ENCODE measurements at regions of chr17 and their contacts with region 1.

Region 1: DNA sequence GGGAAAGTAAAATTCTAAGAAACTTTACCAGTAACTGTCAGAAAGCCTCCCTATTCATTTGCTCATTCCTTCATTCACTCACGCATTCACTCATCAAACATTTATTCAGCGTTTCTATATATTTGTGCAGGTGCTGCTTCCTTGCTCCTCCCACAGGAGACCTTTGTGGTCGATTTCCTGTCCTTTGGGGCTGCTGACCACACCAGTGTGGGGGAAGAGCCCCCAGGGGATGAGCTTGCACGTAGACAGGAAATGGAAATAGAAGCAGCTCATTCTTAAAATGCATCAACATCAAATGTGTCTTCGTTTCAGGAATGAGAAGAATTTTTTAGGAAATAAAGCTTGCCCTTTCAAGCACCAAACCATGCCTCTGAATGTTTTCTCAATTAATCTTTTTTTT is 9.6 kb downstream of the PIK3R6 start:
- DNase-seq: no peak
- H3K4me3 ChIP-seq: no peak overlapping the region
- H3K4me3 Mint-ChIP-seq: peak overlapping the region; percentile 24 to 28
- H3K27ac ChIP-seq: peak overlapping the region; percentile 71 to 85
- H3K27ac Mint-ChIP-seq: peak overlapping the region in 6 of 7 donors; percentile 30 to 98 (median 88)
- H3K4me1 ChIP-seq: peaks cover 59 to 60% of the 10 kb centered on the region in 2 donors
- H3K4me1 Mint-ChIP-seq: peaks cover 61% of the 10 kb centered on the region
- H3K27me3 ChIP-seq: no peaks in the 10 kb centered on the region
- H3K27me3 Mint-ChIP-seq: no peaks in the 10 kb centered on the region
- CTCF ChIP-seq: no peak

Region 2: GRCh38 chr17:8818654-8819330 is 39.1 kb before region 1 on chr17:
- intact Hi-C with region 1: loop called in 1 of 2 experiments (anchors 5 kb)
- DNase-seq: no peak
- H3K4me3 ChIP-seq: no peak overlapping the region
- H3K4me3 Mint-ChIP-seq: no peak overlapping the region
- H3K27ac ChIP-seq: no peak overlapping the region
- H3K27ac Mint-ChIP-seq: peak overlapping the region in 4 of 7 donors; percentile 22 to 82 (median 56)
- H3K4me1 ChIP-seq: no peaks in the 10 kb centered on the region
- H3K4me1 Mint-ChIP-seq: no peaks in the 10 kb centered on the region
- H3K27me3 ChIP-seq: no peaks in the 10 kb centered on the region
- H3K27me3 Mint-ChIP-seq: no peaks in the 10 kb centered on the region
- CTCF ChIP-seq: no peak

Measured in CD14-positive monocyte (primary cell).